Right cardiac atrium (tissue), 5 donors: ENCODE measurements at regions of chr15 and their contacts with region 1.

Region 1: GRCh38 chr15:36925653-36926426 is 174.5 kb downstream of the MEIS2 start:
- DNase-seq: no peak
- ATAC-seq: no peak
- H3K4me3 ChIP-seq: no peak overlapping the region
- H3K27ac ChIP-seq: no peak overlapping the region
- H3K4me1 ChIP-seq: peaks cover 2% of the 10 kb centered on the region
- H3K27me3 ChIP-seq: no peaks in the 10 kb centered on the region

Region 2: DNA sequence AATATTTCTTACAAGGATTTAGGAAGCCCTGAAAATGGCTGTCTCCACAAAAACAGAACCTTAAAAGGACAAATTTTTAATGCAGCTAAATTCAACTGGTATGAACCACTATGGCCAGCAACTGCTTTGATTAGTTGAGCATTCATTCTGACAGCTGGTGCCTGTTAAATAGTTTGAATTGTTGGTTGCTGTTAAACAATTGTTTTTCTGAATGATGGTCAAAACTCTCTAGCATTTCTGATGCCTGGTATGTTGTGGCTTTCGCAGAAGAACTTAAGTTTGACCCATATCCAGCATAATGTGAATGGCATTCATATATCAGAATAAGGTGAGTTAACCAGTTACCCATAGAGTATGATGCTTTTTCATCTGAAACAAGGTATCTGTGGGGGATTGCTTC is 36.1 kb after region 1 on chr15:
- intact Hi-C with region 1: loop called in 1 of 4 experiments (anchors 2 kb)
- DNase-seq: no peak
- ATAC-seq: no peak
- H3K4me3 ChIP-seq: no peak overlapping the region
- H3K27ac ChIP-seq: no peak overlapping the region
- H3K4me1 ChIP-seq: peaks cover 2% of the 10 kb centered on the region
- H3K27me3 ChIP-seq: no peaks in the 10 kb centered on the region

Region 3: GRCh38 chr15:36982430-36982829 is 56.6 kb after region 1 on chr15:
- intact Hi-C with region 1: loop called in 1 of 4 experiments (anchors 10 kb)
- DNase-seq: no peak
- ATAC-seq: no peak
- H3K4me3 ChIP-seq: no peak overlapping the region
- H3K27ac ChIP-seq: no peak overlapping the region
- H3K4me1 ChIP-seq: peaks cover 2% of the 10 kb centered on the region
- H3K27me3 ChIP-seq: no peaks in the 10 kb centered on the region

Region 4: DNA sequence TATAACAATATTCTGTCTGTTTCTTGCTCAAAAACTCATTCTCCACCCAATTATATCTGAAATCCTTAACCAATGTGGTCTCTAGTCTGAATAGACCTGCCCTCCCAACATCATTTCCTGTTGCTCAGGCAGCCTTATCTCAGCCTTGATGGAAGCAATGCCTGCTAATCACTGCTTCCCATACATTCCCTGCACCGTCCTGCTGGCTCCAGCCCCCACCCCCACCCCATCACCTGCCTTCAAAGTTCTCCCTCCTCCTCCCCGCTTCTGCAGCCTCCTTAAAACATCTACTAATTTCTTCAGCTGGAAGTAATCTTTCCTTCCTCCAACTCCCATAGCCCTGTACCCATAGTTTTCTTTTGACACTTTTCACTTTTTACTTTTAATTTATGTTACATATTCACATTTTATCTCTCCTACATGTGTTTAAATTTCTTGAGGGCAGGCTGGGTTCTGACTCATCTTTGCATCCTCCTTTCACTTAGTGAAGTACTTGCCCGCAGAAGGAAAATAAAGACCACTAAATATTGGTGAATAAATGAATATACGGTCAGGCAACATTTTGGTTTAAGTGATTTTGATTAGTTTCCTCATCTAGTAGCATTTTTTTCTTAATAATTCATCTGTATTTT is 76.3 kb after region 1 on chr15:
- intact Hi-C with region 1: no loop called
- DNase-seq: no peak
- ATAC-seq: no peak
- H3K4me3 ChIP-seq: no peak overlapping the region
- H3K27ac ChIP-seq: no peak overlapping the region
- H3K4me1 ChIP-seq: peaks cover 1% of the 10 kb centered on the region
- H3K27me3 ChIP-seq: no peaks in the 10 kb centered on the region

Region 5: DNA sequence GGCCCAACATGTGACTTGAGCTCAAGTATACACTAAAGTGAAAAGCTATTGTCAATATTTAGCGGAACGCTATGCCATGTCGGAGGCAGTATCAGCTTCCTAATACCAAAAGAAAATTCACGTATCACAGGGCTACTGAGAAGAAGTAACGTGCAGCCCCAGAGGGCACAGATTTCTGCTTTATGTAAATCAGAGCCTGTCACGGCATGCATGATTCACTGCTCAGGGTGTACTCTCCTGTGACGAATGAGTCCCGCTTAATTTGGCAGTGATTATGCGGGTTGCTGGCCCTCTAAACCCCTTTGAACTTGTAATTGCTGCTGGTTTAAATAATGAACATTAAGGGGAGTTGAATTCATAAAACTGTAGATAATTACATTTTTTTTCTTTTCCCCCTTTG is 89.2 kb after region 1 on chr15:
- intact Hi-C with region 1: loop called in 1 of 4 experiments (anchors 10 kb)
- DNase-seq: peak in 2 of 3 donors; percentile 56 to 61
- ATAC-seq: peak; percentile 72 to 81
- H3K4me3 ChIP-seq: no peak overlapping the region
- H3K27ac ChIP-seq: peak overlapping the region; percentile 21
- H3K4me1 ChIP-seq: no peaks in the 10 kb centered on the region
- H3K27me3 ChIP-seq: no peaks in the 10 kb centered on the region